IMR-90 (cell line): ENCODE measurements at regions of chr20 and their contacts with region 1.

Region 1: GRCh38 chr20:40962730-40963504 is 65.7 kb upstream of the TOP1 start:
- DNase-seq: peak; percentile 44
- ATAC-seq: peak; percentile 89
- H3K4me3 ChIP-seq: no peak overlapping the region
- H3K27ac ChIP-seq: no peak overlapping the region
- H3K4me1 ChIP-seq: no peaks in the 10 kb centered on the region; the same call in 1 of the 2 replicates
- H3K27me3 ChIP-seq: no peaks in the 10 kb centered on the region
- CTCF ChIP-seq: peak; percentile 88
- POLR2A ChIP-seq: 0 out of 2 replicates have a peak, but pooled peaks have one; percentile 41
- RAD21 ChIP-seq: peak; percentile 90

Region 2: DNA sequence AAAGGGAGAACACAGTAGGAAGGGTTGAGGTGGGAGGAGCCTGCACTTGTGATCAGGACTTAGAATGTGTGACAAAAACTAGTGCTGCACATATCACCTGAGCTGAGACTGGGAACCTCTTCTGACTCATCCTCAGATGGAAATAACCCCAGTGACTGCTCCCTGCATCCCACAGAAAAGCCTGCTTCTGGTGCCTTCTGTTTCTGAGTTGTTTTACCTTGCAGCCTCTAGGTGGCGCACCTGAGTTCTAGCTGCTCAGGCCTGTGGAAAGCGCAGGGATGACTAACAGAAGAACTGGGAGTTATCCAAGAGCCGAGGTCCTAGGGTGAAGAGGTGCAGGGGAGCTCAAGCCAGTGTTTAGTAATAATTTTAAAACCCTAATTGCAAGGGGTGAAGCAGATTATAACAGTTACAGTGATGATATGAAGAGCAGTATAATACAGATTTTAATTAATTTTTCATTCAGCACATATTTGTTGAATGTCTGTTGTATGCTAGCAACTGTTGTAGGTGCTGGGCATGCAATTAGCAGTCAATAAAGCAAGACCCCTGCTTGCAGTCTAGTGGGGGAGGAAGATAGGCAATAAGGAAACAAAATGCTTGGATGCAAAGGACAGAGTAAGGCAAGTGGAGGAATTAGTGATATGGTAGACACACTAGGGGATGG is 1698.3 kb before region 1 on chr20:
- CTCF ChIA-PET with region 1: no interaction called
- POLR2A ChIA-PET with region 1: no interaction called
- dilution Hi-C with region 1: no loop called
- in situ Hi-C with region 1: no loop called
- intact Hi-C with region 1: loop called (anchors 1 kb)
- DNase-seq: peak; percentile 71
- ATAC-seq: peak; percentile 80
- H3K4me3 ChIP-seq: no peak overlapping the region
- H3K27ac ChIP-seq: no peak overlapping the region
- H3K4me1 ChIP-seq: no peaks in the 10 kb centered on the region
- H3K27me3 ChIP-seq: no peaks in the 10 kb centered on the region
- CTCF ChIP-seq: peak; percentile 68
- POLR2A ChIP-seq: no peak
- RAD21 ChIP-seq: peak; percentile 43; the same call in 1 of the 2 replicates

Region 3: GRCh38 chr20:40265825-40266533 is 696.9 kb before region 1 on chr20:
- CTCF ChIA-PET with region 1: no interaction called
- POLR2A ChIA-PET with region 1: no interaction called
- dilution Hi-C with region 1: no loop called
- in situ Hi-C with region 1: no loop called
- intact Hi-C with region 1: loop called (anchors 5 kb)
- DNase-seq: no peak
- ATAC-seq: peak; percentile 62
- H3K4me3 ChIP-seq: no peak overlapping the region
- H3K27ac ChIP-seq: no peak overlapping the region
- H3K4me1 ChIP-seq: no peaks in the 10 kb centered on the region
- H3K27me3 ChIP-seq: no peaks in the 10 kb centered on the region
- CTCF ChIP-seq: peak; percentile 15; the same call in 1 of the 2 replicates
- POLR2A ChIP-seq: no peak
- RAD21 ChIP-seq: no peak

Region 4: GRCh38 chr20:40741507-40742106 is 221.3 kb before region 1 on chr20:
- CTCF ChIA-PET with region 1: interaction called, 5 read pairs
- POLR2A ChIA-PET with region 1: no interaction called
- dilution Hi-C with region 1: no loop called
- in situ Hi-C with region 1: no loop called
- intact Hi-C with region 1: loop called (anchors 1 kb)
- DNase-seq: peak; percentile 34
- ATAC-seq: peak; percentile 65
- H3K4me3 ChIP-seq: no peak overlapping the region
- H3K27ac ChIP-seq: no peak overlapping the region
- H3K4me1 ChIP-seq: no peaks in the 10 kb centered on the region
- H3K27me3 ChIP-seq: peaks cover 20% of the 10 kb centered on the region
- CTCF ChIP-seq: peak; percentile 53
- POLR2A ChIP-seq: no peak
- RAD21 ChIP-seq: peak; percentile 42

Region 5: DNA sequence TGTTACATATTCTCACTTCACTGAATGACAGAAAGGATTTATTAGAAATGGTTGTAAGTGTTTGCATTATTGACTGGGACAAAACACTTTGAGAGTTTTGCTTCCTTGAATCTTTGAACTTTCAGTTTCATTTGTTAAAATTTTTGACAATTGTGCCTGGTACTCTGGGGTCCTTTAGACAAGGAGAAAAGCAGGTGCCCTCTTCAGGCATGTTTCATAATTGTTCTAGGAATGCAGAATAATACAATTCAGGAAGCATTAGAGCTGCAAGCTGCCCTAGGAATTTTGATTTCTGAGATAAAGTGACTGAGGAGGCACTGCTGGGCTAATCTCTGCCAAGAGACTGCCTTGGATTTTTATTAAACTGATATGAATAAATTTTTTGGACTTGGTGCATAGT is 115.4 kb after region 1 on chr20:
- CTCF ChIA-PET with region 1: interaction called, 4 read pairs
- POLR2A ChIA-PET with region 1: no interaction called
- dilution Hi-C with region 1: no loop called
- in situ Hi-C with region 1: no loop called
- intact Hi-C with region 1: loop called (anchors 5 kb)
- DNase-seq: peak; percentile 53
- ATAC-seq: peak; percentile 55
- H3K4me3 ChIP-seq: no peak overlapping the region
- H3K27ac ChIP-seq: no peak overlapping the region
- H3K4me1 ChIP-seq: peaks cover 14% of the 10 kb centered on the region
- H3K27me3 ChIP-seq: no peaks in the 10 kb centered on the region
- CTCF ChIP-seq: peak; percentile 61
- POLR2A ChIP-seq: no peak
- RAD21 ChIP-seq: peak; percentile 66

Region 6: GRCh38 chr20:41161886-41162285 is 199.0 kb after region 1 on chr20:
- CTCF ChIA-PET with region 1: no interaction called
- POLR2A ChIA-PET with region 1: no interaction called
- dilution Hi-C with region 1: no loop called
- in situ Hi-C with region 1: no loop called
- intact Hi-C with region 1: no loop called
- DNase-seq: no peak
- ATAC-seq: no peak
- H3K4me3 ChIP-seq: no peak overlapping the region
- H3K27ac ChIP-seq: no peak overlapping the region
- H3K4me1 ChIP-seq: no peaks in the 10 kb centered on the region
- H3K27me3 ChIP-seq: no peaks in the 10 kb centered on the region
- CTCF ChIP-seq: no peak
- POLR2A ChIP-seq: no peak
- RAD21 ChIP-seq: no peak

Region 7: GRCh38 chr20:41617931-41618806 is 655.3 kb after region 1 on chr20 and contains the start of gene CHD6:
- CTCF ChIA-PET with region 1: no interaction called
- POLR2A ChIA-PET with region 1: no interaction called
- dilution Hi-C with region 1: no loop called
- in situ Hi-C with region 1: loop called (anchors 25 kb)
- intact Hi-C with region 1: no loop called
- DNase-seq: peak; percentile 99
- ATAC-seq: peak; percentile 98
- H3K4me3 ChIP-seq: peak within 1 kb of the TSS; percentile 85
- H3K27ac ChIP-seq: peak within 1 kb of the TSS; percentile 59
- H3K4me1 ChIP-seq: peaks cover 4% of the 10 kb centered on the region
- H3K27me3 ChIP-seq: peaks cover 7% of the 10 kb centered on the region; the same call in 1 of the 2 replicates
- CTCF ChIP-seq: no peak
- POLR2A ChIP-seq: peak; percentile 39; the same call in 1 of the 2 replicates
- RAD21 ChIP-seq: no peak
- total RNA-seq, gene CHD6: 26.7 and 31.7 TPM in 2 replicates